Heart left ventricle (tissue), 16 donors: ENCODE measurements at regions of chr3 and their contacts with region 1.

Region 1: DNA sequence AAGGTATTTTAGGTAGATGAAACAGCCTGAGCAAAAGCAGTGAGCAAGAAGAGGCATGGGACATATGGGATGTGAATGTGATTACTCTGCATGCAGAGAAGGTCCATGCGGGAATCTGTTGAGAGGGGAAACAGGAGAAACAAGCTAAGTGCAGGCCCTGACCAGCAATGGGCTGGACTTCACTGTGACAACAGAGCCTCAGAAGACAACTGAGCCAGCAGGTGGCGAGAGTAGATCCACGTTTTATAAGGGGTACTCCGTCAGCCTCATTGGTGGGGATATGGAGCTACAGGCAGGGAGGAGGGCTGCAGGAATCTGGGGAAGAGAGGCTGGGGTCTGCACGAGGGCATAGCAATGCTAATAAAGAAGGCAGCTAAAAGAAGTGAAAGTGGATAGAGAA is 405.9 kb upstream of the LMCD1 start:
- DNase-seq: no peak
- ATAC-seq: peak in 1 of 4 donors; percentile 32
- H3K4me3 ChIP-seq: no peak overlapping the region
- H3K27ac ChIP-seq: no peak overlapping the region
- H3K4me1 ChIP-seq: no peaks in the 10 kb centered on the region
- H3K27me3 ChIP-seq: no peaks in the 10 kb centered on the region
- CTCF ChIP-seq: peak in 2 of 12 donors; percentile 13
- POLR2A ChIP-seq: no peak

Region 2: GRCh38 chr3:7977245-7978103 is 118.2 kb before region 1 on chr3:
- intact Hi-C with region 1: loop called in 1 of 10 experiments (anchors 10 kb)
- DNase-seq: peak in 2 of 5 donors; percentile 29 to 32
- ATAC-seq: peak; percentile 51 to 75 (median 72)
- H3K4me3 ChIP-seq: no peak overlapping the region
- H3K27ac ChIP-seq: no peak overlapping the region
- H3K4me1 ChIP-seq: peaks cover 0 to 11% (median 3%) of the 10 kb centered on the region in 12 donors
- H3K27me3 ChIP-seq: no peaks in the 10 kb centered on the region
- CTCF ChIP-seq: no peak
- POLR2A ChIP-seq: no peak

Region 3: GRCh38 chr3:8152821-8153418 is 57.2 kb after region 1 on chr3:
- intact Hi-C with region 1: no loop called
- DNase-seq: no peak
- ATAC-seq: no peak
- H3K4me3 ChIP-seq: no peak overlapping the region
- H3K27ac ChIP-seq: no peak overlapping the region
- H3K4me1 ChIP-seq: no peaks in the 10 kb centered on the region
- H3K27me3 ChIP-seq: no peaks in the 10 kb centered on the region
- CTCF ChIP-seq: peak in 1 of 12 donors; percentile 17
- POLR2A ChIP-seq: no peak

Region 4: DNA sequence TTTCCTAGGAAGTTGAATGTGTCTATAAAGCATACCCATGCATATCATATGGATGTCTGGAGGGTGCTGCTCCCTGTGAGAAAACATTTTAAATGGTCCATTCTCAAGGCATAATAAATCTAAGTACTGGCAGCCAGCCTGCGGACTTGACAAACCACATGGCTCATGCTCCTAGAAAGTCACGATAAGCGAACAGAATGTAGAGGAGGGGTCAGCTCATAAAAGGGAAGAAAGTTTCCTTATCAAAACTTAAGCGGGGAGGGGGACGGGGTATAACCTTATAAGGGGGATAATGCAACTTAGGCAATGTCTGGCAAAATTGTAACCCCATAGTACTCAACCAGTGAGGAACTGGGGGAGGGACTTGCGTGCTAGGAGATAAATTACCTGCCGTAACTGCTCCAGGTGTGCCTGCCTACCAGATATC is 246.1 kb after region 1 on chr3:
- intact Hi-C with region 1: no loop called
- DNase-seq: no peak
- ATAC-seq: no peak
- H3K4me3 ChIP-seq: no peak overlapping the region
- H3K27ac ChIP-seq: no peak overlapping the region
- H3K4me1 ChIP-seq: peaks cover 0 to 3% (median 0%) of the 10 kb centered on the region in 12 donors
- H3K27me3 ChIP-seq: no peaks in the 10 kb centered on the region
- CTCF ChIP-seq: no peak
- POLR2A ChIP-seq: no peak

Region 5: GRCh38 chr3:8481372-8481771 is 385.6 kb after region 1 on chr3:
- intact Hi-C with region 1: no loop called
- DNase-seq: no peak
- ATAC-seq: peak in 1 of 4 donors; percentile 35
- H3K4me3 ChIP-seq: no peak overlapping the region
- H3K27ac ChIP-seq: peak overlapping the region in 7 of 12 donors; percentile 3 to 75 (median 23)
- H3K4me1 ChIP-seq: peaks cover 0 to 39% (median 27%) of the 10 kb centered on the region in 12 donors
- H3K27me3 ChIP-seq: no peaks in the 10 kb centered on the region
- CTCF ChIP-seq: peak in 8 of 12 donors; percentile 12 to 47 (median 36)
- POLR2A ChIP-seq: no peak